Activated CD4-positive, alpha-beta T cell treated with anti-CD3 and anti-CD28 coated beads, Interleukin-2, amount 10 ng/mL, durations not matched to agents 24 days and 14 days (primary cell): ENCODE measurements at regions of chr2 and their contacts with region 1.

Region 1: GRCh38 chr2:170928824-170929685 is at the start of gene GORASP2:
- DNase-seq: peak; percentile 99
- H3K4me3 Mint-ChIP-seq: peak within 1 kb of the TSS; percentile 92
- H3K27ac Mint-ChIP-seq: peak within 1 kb of the TSS; percentile 97
- H3K4me1 Mint-ChIP-seq: peaks cover 32% of the 10 kb centered on the region
- H3K27me3 Mint-ChIP-seq: no peaks in the 10 kb centered on the region
- total RNA-seq, gene GORASP2: 93.0 and 96.7 TPM in 2 replicates

Region 2: DNA sequence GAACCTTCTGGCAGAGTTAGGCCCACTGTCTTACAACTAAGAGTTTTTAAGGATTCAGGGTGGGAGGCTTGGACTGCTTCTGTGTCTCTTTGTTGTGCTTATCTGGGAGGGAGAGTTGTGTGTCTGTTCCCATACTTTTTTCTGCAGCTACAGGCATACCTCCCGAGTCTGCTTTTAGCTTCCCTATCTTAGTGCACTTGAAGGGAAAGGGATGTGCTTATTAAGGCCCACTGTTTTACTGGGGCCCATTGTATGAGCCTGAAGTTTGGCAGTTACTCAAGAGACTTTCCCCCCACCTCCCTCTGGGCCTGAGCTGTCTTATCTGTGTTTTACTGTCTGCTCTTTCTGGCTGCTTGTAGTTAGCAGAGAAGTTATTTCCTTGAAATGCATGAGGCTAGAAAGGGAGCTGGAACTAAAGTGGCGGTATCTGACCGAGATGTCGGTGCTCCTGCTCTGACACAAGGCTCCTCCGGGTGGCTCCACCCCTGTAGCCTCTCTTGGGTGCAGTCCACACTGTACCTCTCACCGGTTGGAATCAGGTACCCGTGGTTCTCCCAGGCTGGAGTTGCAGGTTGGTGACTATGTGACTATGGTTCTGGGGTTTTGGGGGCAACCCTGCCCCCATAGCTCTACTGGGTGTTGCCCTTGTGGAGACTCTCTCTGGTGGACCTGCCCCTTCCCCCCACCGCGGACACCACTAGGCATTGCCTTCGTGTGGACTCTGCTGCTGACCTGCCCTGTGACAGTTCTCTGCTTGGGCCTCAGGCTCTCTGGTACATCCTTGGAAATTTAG is 1088.9 kb before region 1 on chr2:
- intact Hi-C with region 1: no loop called
- DNase-seq: no peak
- H3K4me3 Mint-ChIP-seq: no peak overlapping the region
- H3K27ac Mint-ChIP-seq: no peak overlapping the region
- H3K4me1 Mint-ChIP-seq: peaks cover 3% of the 10 kb centered on the region
- H3K27me3 Mint-ChIP-seq: no peaks in the 10 kb centered on the region

Region 3: DNA sequence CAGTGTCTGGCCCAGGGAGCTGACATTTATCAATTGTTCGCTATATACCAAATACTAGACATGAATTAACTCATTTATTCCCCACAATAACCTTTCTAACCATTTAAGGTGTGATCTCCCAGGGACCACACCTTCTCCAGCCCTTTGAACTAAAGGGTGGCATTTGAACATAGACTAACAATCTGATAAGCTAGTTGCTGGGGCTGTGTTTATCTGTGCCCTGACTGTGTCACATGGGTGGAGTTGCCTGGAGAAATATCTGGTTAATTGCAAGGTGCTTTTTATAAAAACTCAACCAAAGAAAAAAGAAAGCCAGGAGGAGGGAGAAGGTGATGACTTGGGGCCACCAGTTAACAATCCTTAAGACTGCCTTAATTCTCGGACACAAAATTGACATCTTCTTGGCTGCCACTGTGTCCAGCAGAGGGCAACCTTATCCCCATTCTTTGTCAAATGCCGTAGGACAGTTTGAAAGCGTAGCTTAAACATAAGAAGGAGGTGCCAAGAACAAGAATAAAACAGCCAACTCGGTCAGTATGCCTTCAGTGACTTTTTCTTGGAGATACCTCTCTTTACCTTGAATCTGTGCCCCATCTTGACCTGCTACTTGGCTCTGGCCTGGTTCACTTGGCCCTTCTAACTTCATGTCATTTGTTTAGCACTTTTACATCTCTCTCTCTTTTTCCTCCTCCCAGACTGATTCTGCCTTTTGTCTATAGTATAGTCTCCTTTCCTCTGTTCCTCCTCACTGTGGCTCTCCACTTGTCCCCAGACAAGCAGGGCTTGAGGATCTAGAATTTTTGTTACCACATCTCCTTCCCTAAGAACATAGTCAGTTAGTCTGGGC is 567.7 kb before region 1 on chr2:
- intact Hi-C with region 1: loop called (anchors 5 kb)
- DNase-seq: peak; percentile 87
- H3K4me3 Mint-ChIP-seq: peak overlapping the region; percentile 40
- H3K27ac Mint-ChIP-seq: peak overlapping the region; percentile 97
- H3K4me1 Mint-ChIP-seq: peaks cover 38% of the 10 kb centered on the region
- H3K27me3 Mint-ChIP-seq: peaks cover 4% of the 10 kb centered on the region

Region 4: DNA sequence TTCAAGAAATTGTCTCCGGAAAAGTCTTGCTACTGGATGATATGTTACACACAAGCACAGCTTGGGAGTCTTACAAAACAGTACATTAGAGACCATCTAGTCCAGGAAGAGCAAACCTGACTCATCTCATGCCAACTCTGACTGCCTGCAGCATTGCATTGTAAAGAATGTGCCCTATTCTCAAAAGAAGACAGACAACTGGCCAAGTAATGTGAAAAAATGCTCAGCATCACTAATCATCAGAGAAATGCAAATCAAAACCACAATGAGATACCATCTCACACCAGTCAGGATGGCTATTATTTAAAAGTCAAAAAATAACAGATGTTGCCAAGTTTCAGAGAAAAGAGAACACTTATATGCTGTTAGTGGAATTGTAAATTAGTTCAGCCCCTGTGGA is 42.7 kb before region 1 on chr2:
- intact Hi-C with region 1: no loop called
- DNase-seq: no peak
- H3K4me3 Mint-ChIP-seq: no peak overlapping the region
- H3K27ac Mint-ChIP-seq: no peak overlapping the region
- H3K4me1 Mint-ChIP-seq: no peaks in the 10 kb centered on the region
- H3K27me3 Mint-ChIP-seq: peaks cover 43% of the 10 kb centered on the region

Region 5: GRCh38 chr2:170940066-170940465 is 11.0 kb after region 1 on chr2:
- intact Hi-C with region 1: no loop called
- DNase-seq: no peak
- H3K4me3 Mint-ChIP-seq: no peak overlapping the region
- H3K27ac Mint-ChIP-seq: no peak overlapping the region
- H3K4me1 Mint-ChIP-seq: peaks cover 29% of the 10 kb centered on the region
- H3K27me3 Mint-ChIP-seq: no peaks in the 10 kb centered on the region

Region 6: GRCh38 chr2:170973492-170974303 is 44.6 kb after region 1 on chr2:
- intact Hi-C with region 1: loop called (anchors 1 kb)
- DNase-seq: peak; percentile 96
- H3K4me3 Mint-ChIP-seq: peak overlapping the region; percentile 82
- H3K27ac Mint-ChIP-seq: peak overlapping the region; percentile 56
- H3K4me1 Mint-ChIP-seq: peaks cover 10% of the 10 kb centered on the region
- H3K27me3 Mint-ChIP-seq: peaks cover 3% of the 10 kb centered on the region

Region 7: GRCh38 chr2:171433763-171434670 is 505.0 kb after region 1 on chr2 and contains the starts of genes DCAF17 and METTL8:
- intact Hi-C with region 1: loop called (anchors 1 kb)
- DNase-seq: peak; percentile 98
- H3K4me3 Mint-ChIP-seq: peak within 1 kb of the TSS; percentile 82
- H3K27ac Mint-ChIP-seq: peak within 1 kb of the TSS; percentile 88
- H3K4me1 Mint-ChIP-seq: peaks cover 23% of the 10 kb centered on the region
- H3K27me3 Mint-ChIP-seq: no peaks in the 10 kb centered on the region
- total RNA-seq, gene DCAF17: 27.3 and 27.4 TPM in 2 replicates
- total RNA-seq, gene METTL8: 33.1 and 42.9 TPM in 2 replicates

Region 8: GRCh38 chr2:172442072-172442895 is 1513.2 kb after region 1 on chr2:
- intact Hi-C with region 1: loop called (anchors 10 kb)
- DNase-seq: peak; percentile 75
- H3K4me3 Mint-ChIP-seq: no peak overlapping the region
- H3K27ac Mint-ChIP-seq: no peak overlapping the region
- H3K4me1 Mint-ChIP-seq: peaks cover 23% of the 10 kb centered on the region
- H3K27me3 Mint-ChIP-seq: peaks cover 15% of the 10 kb centered on the region